Naive thymus-derived CD4-positive, alpha-beta T cell (primary cell): ENCODE measurements at regions of chr9 and their contacts with region 1.

Region 1: DNA sequence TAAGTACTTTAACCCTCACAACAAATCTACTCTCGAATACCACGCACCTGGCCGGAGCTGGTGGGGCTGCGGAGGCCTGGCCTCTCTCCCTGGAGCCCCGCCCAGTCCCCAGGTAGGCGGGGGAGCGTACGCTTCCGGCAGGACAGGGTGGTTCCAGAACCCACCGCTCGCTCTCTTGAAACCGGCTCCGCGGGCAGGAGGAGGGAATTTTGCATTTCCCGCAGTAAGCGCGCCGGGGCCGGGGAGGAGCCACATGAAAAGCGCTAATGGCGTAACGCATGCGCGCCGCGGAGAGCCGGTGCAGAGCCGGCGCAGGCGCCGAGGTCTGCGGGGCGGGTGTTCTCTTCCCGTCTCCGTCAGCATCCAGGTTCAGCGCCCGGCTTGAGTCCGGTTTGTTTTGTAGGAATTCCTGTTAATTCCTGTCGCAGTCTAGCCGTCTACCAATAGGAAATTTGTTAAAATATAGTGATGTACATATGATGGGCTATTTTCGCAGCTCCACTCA is 20.8 kb downstream of the CAVIN4 start:
- DNase-seq: peak; percentile 72 to 84 (median 80)
- ATAC-seq: peak; percentile 86
- H3K4me3 ChIP-seq: peak overlapping the region; percentile 65
- H3K4me3 Mint-ChIP-seq: peak overlapping the region; percentile 68 to 90 (median 82)
- H3K27ac ChIP-seq: peak overlapping the region; percentile 36
- H3K27ac Mint-ChIP-seq: peak overlapping the region in 8 of 9 donors; percentile 66 to 90 (median 78)
- H3K4me1 ChIP-seq: peaks cover 7 to 8% of the 10 kb centered on the region in 2 donors
- H3K4me1 Mint-ChIP-seq: peaks cover 12 to 30% (median 22%) of the 10 kb centered on the region in 7 donors
- H3K27me3 ChIP-seq: no peaks in the 10 kb centered on the region
- H3K27me3 Mint-ChIP-seq: peaks cover 0 to 27% (median 0%) of the 10 kb centered on the region in 5 donors

Region 2: GRCh38 chr9:99162759-99163364 is 1435.8 kb before region 1 on chr9:
- CTCF ChIA-PET with region 1: no interaction called
- POLR2A ChIA-PET with region 1: no interaction called
- intact Hi-C with region 1: loop called in 1 of 2 experiments (anchors 5 kb)
- DNase-seq: peak in 7 of 9 donors; percentile 22 to 59 (median 47)
- ATAC-seq: peak; percentile 61
- H3K4me3 ChIP-seq: no peak overlapping the region
- H3K4me3 Mint-ChIP-seq: peak overlapping the region in 1 of 10 donors; percentile 0
- H3K27ac ChIP-seq: no peak overlapping the region
- H3K27ac Mint-ChIP-seq: no peak overlapping the region
- H3K4me1 ChIP-seq: peaks cover 0 to 8% of the 10 kb centered on the region in 2 donors
- H3K4me1 Mint-ChIP-seq: peaks cover 9 to 32% (median 17%) of the 10 kb centered on the region in 7 donors
- H3K27me3 ChIP-seq: no peaks in the 10 kb centered on the region
- H3K27me3 Mint-ChIP-seq: peaks cover 7 to 32% (median 10%) of the 10 kb centered on the region in 5 donors

Region 3: DNA sequence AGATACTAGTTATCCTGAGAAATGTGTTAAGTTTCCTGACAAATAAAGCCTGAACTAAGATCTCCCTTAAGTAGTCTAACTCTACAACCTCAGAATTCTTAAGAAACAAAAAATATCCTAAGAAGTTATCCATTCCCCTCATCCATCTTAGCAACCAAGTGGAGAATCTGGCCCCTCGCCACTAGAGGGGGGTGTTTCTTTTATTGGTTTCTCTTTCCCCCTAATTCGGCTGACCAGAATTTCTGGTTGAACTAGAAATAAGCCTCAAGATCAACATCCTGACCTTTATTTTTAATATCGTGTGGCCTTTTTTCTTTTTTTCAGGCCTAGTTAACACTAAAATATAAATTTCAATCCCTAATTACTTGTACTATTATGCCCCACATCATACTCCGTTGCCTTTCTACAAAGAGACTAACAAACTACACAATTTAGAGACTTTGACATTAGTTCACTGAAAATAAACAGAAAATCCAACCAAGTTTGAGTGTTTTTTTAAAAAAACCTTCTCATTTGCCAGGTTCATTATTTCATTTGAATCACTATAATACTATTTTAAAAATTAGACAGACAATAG is 791.3 kb before region 1 on chr9:
- CTCF ChIA-PET with region 1: no interaction called
- POLR2A ChIA-PET with region 1: no interaction called
- intact Hi-C with region 1: loop called in 1 of 2 experiments (anchors 1 kb)
- DNase-seq: peak in 8 of 9 donors; percentile 31 to 76 (median 68)
- ATAC-seq: peak; percentile 89
- H3K4me3 ChIP-seq: no peak overlapping the region
- H3K4me3 Mint-ChIP-seq: no peak overlapping the region
- H3K27ac ChIP-seq: no peak overlapping the region
- H3K27ac Mint-ChIP-seq: peak overlapping the region in 4 of 9 donors; percentile 1 to 63 (median 12)
- H3K4me1 ChIP-seq: peaks cover 0 to 5% of the 10 kb centered on the region in 2 donors
- H3K4me1 Mint-ChIP-seq: peaks cover 0 to 23% (median 4%) of the 10 kb centered on the region in 7 donors
- H3K27me3 ChIP-seq: no peaks in the 10 kb centered on the region
- H3K27me3 Mint-ChIP-seq: peaks cover 0 to 12% (median 0%) of the 10 kb centered on the region in 5 donors

Region 4: DNA sequence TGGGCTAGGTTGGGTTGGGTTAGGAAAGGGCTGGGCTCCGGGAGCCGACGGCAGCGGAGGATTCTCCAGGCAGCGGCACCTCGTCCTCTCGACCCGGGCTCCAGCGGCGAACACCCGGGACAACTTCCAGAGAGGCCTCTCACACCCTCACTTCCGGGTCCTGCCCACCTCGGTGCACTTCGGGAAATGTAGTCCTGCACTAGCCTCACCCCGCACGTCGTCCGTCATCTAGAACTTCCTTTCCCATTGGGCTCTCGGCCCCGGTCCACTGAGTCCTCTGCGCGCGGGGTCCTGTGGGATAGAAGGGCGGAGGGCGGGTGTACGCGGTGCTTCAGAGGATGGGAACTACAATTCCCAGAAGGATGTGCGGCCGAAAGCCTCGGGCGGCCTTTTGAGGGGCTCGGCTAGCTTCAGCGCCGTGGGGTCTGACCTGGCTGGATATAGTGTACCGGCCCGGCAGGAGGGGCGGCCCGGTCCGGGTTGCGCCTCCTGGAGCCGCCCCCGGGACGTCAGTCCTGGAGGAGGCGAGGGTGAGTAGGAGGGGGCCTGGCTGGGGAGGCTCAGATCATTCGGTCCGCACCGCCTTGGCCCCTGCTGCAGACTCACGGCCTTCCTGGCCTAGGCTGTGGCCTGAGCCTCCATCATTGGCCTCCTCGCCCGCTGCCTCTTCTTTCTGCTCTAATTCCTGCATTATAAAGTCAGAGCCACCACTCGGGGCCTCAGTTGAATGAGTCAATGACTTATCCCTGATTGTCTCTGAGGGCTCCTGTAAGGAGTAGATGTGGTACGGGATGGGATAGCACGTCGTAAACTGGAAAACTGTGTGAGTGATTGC is 499.6 kb before region 1 on chr9 and contains the starts of genes ERP44 and INVS:
- CTCF ChIA-PET with region 1: no interaction called
- POLR2A ChIA-PET with region 1: no interaction called
- intact Hi-C with region 1: loop called in 1 of 2 experiments (anchors 5 kb)
- DNase-seq: peak; percentile 82 to 98 (median 94)
- ATAC-seq: peak; percentile 99
- H3K4me3 ChIP-seq: peak within 1 kb of the TSS; percentile 93
- H3K4me3 Mint-ChIP-seq: peak within 1 kb of the TSS; percentile 94 to 100 (median 98)
- H3K27ac ChIP-seq: peak within 1 kb of the TSS; percentile 89
- H3K27ac Mint-ChIP-seq: peak within 1 kb of the TSS; percentile 84 to 99 (median 97)
- H3K4me1 ChIP-seq: peaks cover 18 to 25% of the 10 kb centered on the region in 2 donors
- H3K4me1 Mint-ChIP-seq: peaks cover 26 to 53% (median 43%) of the 10 kb centered on the region in 7 donors
- H3K27me3 ChIP-seq: no peaks in the 10 kb centered on the region
- H3K27me3 Mint-ChIP-seq: no peaks in the 10 kb centered on the region
- total RNA-seq, gene ERP44: 9.8 to 19.5 (median 15.2) TPM
- total RNA-seq, gene INVS: 15.0 to 20.8 (median 20.6) TPM

Region 5: GRCh38 chr9:100370064-100370723 is 228.5 kb before region 1 on chr9:
- CTCF ChIA-PET with region 1: no interaction called
- POLR2A ChIA-PET with region 1: no interaction called
- intact Hi-C with region 1: loop called in 1 of 2 experiments (anchors 1 kb)
- DNase-seq: no peak
- ATAC-seq: no peak
- H3K4me3 ChIP-seq: no peak overlapping the region
- H3K4me3 Mint-ChIP-seq: no peak overlapping the region
- H3K27ac ChIP-seq: no peak overlapping the region
- H3K27ac Mint-ChIP-seq: no peak overlapping the region
- H3K4me1 ChIP-seq: no peaks in the 10 kb centered on the region
- H3K4me1 Mint-ChIP-seq: no peaks in the 10 kb centered on the region
- H3K27me3 ChIP-seq: no peaks in the 10 kb centered on the region
- H3K27me3 Mint-ChIP-seq: peaks cover 0 to 3% (median 0%) of the 10 kb centered on the region in 5 donors

Region 6: GRCh38 chr9:100505564-100506159 is 93.0 kb before region 1 on chr9:
- CTCF ChIA-PET with region 1: no interaction called
- POLR2A ChIA-PET with region 1: no interaction called
- intact Hi-C with region 1: loop called in 1 of 2 experiments (anchors 1 kb)
- DNase-seq: peak in 7 of 9 donors; percentile 8 to 63 (median 32)
- ATAC-seq: no peak
- H3K4me3 ChIP-seq: no peak overlapping the region
- H3K4me3 Mint-ChIP-seq: no peak overlapping the region
- H3K27ac ChIP-seq: no peak overlapping the region
- H3K27ac Mint-ChIP-seq: no peak overlapping the region
- H3K4me1 ChIP-seq: no peaks in the 10 kb centered on the region
- H3K4me1 Mint-ChIP-seq: no peaks in the 10 kb centered on the region
- H3K27me3 ChIP-seq: no peaks in the 10 kb centered on the region
- H3K27me3 Mint-ChIP-seq: no peaks in the 10 kb centered on the region

Region 7: DNA sequence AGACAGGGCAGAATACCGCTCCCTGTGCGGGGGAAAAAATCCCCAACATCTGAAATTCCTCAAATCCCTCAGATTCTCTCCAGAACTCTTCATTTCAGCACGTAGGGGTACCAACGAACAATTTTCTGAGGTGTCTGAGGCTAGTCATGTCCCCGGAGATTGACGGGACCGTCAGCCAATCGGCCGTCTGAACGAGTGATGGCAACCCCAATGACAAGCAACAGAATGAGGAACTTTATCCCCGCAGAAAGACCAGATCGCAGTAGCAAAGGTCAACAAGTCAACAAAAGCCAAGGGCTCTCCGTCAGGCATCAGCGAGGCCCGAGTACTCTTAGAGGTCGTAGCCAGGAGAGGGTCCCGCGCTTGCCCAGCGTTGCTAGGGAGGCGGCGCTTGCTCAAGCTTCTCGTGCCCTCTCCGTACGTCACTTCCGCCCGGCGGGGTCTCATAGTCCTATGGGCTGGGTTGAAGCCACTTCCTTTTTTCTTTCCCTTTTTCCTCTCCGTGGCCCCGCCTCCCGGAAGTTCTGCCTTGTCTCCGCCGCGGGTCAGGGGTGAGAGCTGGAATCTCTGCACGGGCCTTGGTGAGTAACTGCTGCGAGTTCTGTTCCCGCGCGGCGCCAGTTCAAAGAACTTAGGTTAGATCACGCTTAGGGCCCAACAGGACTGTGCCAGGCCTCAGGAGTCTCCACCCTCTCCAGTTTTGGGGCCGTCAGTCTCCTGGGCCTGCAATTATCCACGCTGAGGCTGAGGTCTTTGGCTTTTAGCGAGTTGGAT is 934.8 kb after region 1 on chr9 and contains the start of gene RNF20:
- CTCF ChIA-PET with region 1: no interaction called
- POLR2A ChIA-PET with region 1: no interaction called
- intact Hi-C with region 1: loop called in 1 of 2 experiments (anchors 2 kb)
- DNase-seq: peak; percentile 96 to 100 (median 99)
- ATAC-seq: peak; percentile 95
- H3K4me3 ChIP-seq: peak within 1 kb of the TSS; percentile 96
- H3K4me3 Mint-ChIP-seq: peak within 1 kb of the TSS; percentile 89 to 98 (median 94)
- H3K27ac ChIP-seq: peak within 1 kb of the TSS; percentile 99
- H3K27ac Mint-ChIP-seq: peak within 1 kb of the TSS; percentile 93 to 99 (median 99)
- H3K4me1 ChIP-seq: peaks cover 20 to 24% of the 10 kb centered on the region in 2 donors
- H3K4me1 Mint-ChIP-seq: peaks cover 14 to 20% (median 18%) of the 10 kb centered on the region in 7 donors
- H3K27me3 ChIP-seq: no peaks in the 10 kb centered on the region
- H3K27me3 Mint-ChIP-seq: peaks cover 0 to 5% (median 4%) of the 10 kb centered on the region in 5 donors
- total RNA-seq, gene RNF20: 30.5 to 67.8 (median 45.9) TPM